ENCODE measurements at regions of chr2 and their contacts with region 1.

Region 1: GRCh38 chr2:86453836-86454235 is 12.7 kb downstream of the KDM3A start:
- DNase-seq: no peak
- H3K4me3 ChIP-seq: no peak overlapping the region
- H3K27ac ChIP-seq: no peak overlapping the region
- H3K4me1 ChIP-seq: no peaks in the 10 kb centered on the region
- H3K27me3 ChIP-seq: no peaks in the 10 kb centered on the region

Region 2: DNA sequence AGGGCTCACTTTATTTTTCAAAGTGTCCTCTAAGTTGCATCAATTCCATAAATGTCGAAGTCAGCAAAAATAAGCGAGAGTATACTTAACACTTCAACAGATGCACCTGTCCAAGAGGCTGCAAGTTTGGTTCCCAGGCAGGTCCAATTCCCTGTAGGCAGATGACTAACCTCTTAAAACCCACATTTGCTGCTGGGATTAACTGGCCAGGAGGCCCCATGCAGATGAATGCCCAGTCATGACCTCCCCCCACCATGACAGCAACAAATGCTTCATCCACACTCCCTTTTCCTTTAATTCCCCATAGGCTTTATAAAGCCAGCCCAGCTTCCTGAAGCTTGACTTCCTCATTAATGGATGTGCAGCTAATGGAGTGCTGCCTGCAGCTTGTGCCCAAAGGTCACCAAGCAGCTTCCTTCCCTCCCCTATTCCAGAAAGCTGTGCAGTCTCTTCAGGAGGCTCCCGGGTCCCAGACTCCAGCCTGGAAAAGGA is 152.1 kb before region 1 on chr2:
- CTCF ChIA-PET with region 1: no interaction called
- POLR2A ChIA-PET with region 1: no interaction called
- DNase-seq: no peak
- H3K4me3 ChIP-seq: no peak overlapping the region
- H3K27ac ChIP-seq: no peak overlapping the region
- H3K4me1 ChIP-seq: no peaks in the 10 kb centered on the region
- H3K27me3 ChIP-seq: peaks cover 8 to 25% (median 10%) of the 10 kb centered on the region in 5 experiments

Region 3: GRCh38 chr2:86433137-86433536 is 20.7 kb before region 1 on chr2:
- CTCF ChIA-PET with region 1: no interaction called
- POLR2A ChIA-PET with region 1: no interaction called
- DNase-seq: peak in 2 of 3 donors; percentile 29 to 36
- H3K4me3 ChIP-seq: no peak overlapping the region
- H3K27ac ChIP-seq: no peak overlapping the region
- H3K4me1 ChIP-seq: no peaks in the 10 kb centered on the region
- H3K27me3 ChIP-seq: no peaks in the 10 kb centered on the region

Region 4: DNA sequence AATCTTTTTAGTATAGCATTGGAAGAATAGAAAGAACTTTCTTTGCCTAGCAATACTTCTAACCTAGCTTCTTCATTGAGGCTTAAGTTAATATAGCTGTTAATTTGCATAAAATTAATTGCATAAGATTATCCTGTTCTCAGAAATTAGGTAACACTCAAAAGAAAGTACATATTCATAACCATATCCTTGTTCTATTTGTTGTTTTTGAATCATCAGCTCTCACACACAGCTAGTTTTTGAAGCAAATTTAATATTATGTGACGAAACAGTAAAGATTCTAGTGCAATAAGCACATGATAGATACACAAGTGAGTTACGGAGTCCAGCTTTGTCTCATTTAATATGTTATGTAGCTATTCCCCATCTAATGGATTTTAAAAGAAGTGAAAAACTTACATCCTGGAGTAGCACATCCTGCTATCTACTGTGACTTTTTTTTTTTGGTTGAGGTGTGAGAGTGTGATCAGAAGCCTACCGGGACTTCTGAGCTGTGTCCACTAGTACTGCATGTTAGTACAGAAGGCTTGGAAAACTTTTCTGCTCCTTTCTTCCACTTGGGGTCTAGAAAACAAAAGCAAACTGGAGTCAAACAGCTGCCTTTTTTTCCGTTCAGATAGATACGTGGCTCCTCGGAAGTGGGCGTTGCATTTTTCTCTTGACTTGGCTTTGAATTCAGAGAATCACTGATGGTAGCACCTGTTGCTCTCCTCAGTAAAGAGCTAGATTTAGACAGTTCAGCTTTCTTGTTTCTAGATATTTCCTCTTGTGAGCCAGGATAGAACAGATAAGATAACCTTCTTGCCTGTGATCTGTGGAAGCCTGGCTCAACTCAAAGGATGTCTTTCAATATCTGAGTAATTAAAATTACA is 14.6 kb after region 1 on chr2:
- CTCF ChIA-PET with region 1: interaction called, 11 read pairs
- POLR2A ChIA-PET with region 1: no interaction called
- DNase-seq: no peak
- H3K4me3 ChIP-seq: no peak overlapping the region
- H3K27ac ChIP-seq: no peak overlapping the region
- H3K4me1 ChIP-seq: no peaks in the 10 kb centered on the region
- H3K27me3 ChIP-seq: no peaks in the 10 kb centered on the region